GM12878 (cell line): ENCODE measurements at regions of chr5 and their contacts with region 1.

Region 1: GRCh38 chr5:151164686-151165392 is 7.3 kb upstream of the ANXA6 start:
- DNase-seq: peak; percentile 83
- ATAC-seq: peak; percentile 98
- H3K4me3 ChIP-seq: no peak overlapping the region
- H3K27ac ChIP-seq: no peak overlapping the region
- H3K4me1 ChIP-seq: peaks cover 6% of the 10 kb centered on the region; the same call in 1 of the 2 replicates
- H3K27me3 ChIP-seq: no peaks in the 10 kb centered on the region
- CTCF ChIP-seq: peak; percentile 87 to 98 (median 92); a peak in 5 of 6 replicates
- EP300 ChIP-seq: no peak
- POLR2A ChIP-seq: no peak
- RAD21 ChIP-seq: peak; percentile 100

Region 2: GRCh38 chr5:150560401-150561193 is 604.2 kb before region 1 on chr5:
- CTCF ChIA-PET with region 1: interaction called, 8 read pairs
- POLR2A ChIA-PET with region 1: no interaction called
- RAD21 ChIA-PET with region 1: no interaction called
- SMC1A ChIA-PET with region 1: interaction called, 4 read pairs
- in situ Hi-C with region 1: no loop called
- intact Hi-C with region 1: loop called (anchors 2 kb)
- DNase-seq: peak; percentile 42
- ATAC-seq: peak; percentile 91
- H3K4me3 ChIP-seq: no peak overlapping the region
- H3K27ac ChIP-seq: no peak overlapping the region
- H3K4me1 ChIP-seq: peaks cover 14% of the 10 kb centered on the region
- H3K27me3 ChIP-seq: no peaks in the 10 kb centered on the region
- CTCF ChIP-seq: peak; percentile 75 to 89 (median 86)
- EP300 ChIP-seq: no peak
- POLR2A ChIP-seq: no peak
- RAD21 ChIP-seq: peak; percentile 96

Region 3: GRCh38 chr5:150904479-150905318 is 260.1 kb before region 1 on chr5 and contains the start of gene ZNF300:
- CTCF ChIA-PET with region 1: no interaction called
- POLR2A ChIA-PET with region 1: no interaction called
- RAD21 ChIA-PET with region 1: no interaction called
- SMC1A ChIA-PET with region 1: no interaction called
- in situ Hi-C with region 1: no loop called
- intact Hi-C with region 1: no loop called
- DNase-seq: peak; percentile 32
- ATAC-seq: peak; percentile 99
- H3K4me3 ChIP-seq: no peak within 1 kb of the TSS; the same call in 1 of the 2 replicates
- H3K27ac ChIP-seq: no peak within 1 kb of the TSS
- H3K4me1 ChIP-seq: no peaks in the 10 kb centered on the region
- H3K27me3 ChIP-seq: no peaks in the 10 kb centered on the region
- CTCF ChIP-seq: no peak
- EP300 ChIP-seq: no peak
- POLR2A ChIP-seq: peak; percentile 29; the same call in 1 of the 2 replicates
- RAD21 ChIP-seq: no peak
- polyA plus RNA-seq, gene ZNF300: 0.03 to 0.09 TPM

Region 4: DNA sequence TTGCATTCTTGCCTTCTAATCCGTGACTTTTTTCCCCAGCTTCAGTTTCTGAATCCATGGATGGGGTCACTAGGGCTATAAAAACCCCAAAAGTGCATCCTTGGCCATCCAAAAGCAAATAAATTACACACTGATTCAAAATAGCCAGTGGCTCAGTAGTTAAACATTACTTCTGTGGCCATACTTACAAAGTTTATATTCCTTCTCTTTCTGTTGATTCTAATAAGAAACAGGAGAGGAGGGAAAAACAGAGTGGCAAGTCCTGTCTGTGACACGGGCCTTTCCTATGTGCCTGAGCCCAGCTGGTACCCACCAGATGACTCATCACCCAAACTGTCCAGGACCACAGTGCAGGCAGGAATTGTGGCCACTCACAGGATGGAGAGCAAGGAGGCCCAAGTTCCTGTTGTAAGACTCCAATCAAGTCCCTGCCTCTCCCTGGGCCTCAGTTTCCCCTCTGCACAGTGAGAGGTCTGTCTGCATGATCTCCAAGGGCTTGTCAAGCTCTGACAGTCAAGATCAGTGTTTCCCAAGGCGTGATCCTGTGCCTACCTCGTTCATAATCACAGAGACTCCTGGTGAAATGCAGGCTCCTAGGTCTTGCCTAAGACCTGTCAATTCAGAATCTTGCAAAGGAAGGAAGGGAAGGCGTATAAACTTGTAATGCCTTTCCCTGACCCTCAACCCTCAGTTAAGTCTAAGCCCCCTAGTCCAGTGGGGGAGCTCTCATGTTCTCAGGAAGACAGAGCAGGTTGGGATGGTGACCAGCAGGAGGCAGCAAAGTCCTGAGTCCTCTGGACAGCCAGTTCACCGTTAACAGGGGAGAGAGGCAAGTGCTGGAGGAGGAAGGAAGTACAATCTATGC is 113.5 kb before region 1 on chr5:
- CTCF ChIA-PET with region 1: interaction called, 214 read pairs
- POLR2A ChIA-PET with region 1: interaction called, 8 read pairs
- RAD21 ChIA-PET with region 1: interaction called, 39 read pairs
- SMC1A ChIA-PET with region 1: interaction called, 92 read pairs
- in situ Hi-C with region 1: loop called (anchors 5 kb)
- intact Hi-C with region 1: loop called (anchors 1 kb)
- DNase-seq: peak; percentile 43
- ATAC-seq: peak; percentile 93
- H3K4me3 ChIP-seq: no peak overlapping the region
- H3K27ac ChIP-seq: no peak overlapping the region
- H3K4me1 ChIP-seq: no peaks in the 10 kb centered on the region; the same call in 1 of the 2 replicates
- H3K27me3 ChIP-seq: no peaks in the 10 kb centered on the region
- CTCF ChIP-seq: peak; percentile 86 to 87 (median 86)
- EP300 ChIP-seq: no peak
- POLR2A ChIP-seq: no peak
- RAD21 ChIP-seq: peak; percentile 91

Region 5: GRCh38 chr5:151093476-151093889 is 71.4 kb before region 1 on chr5:
- CTCF ChIA-PET with region 1: interaction called, 19 read pairs
- POLR2A ChIA-PET with region 1: no interaction called
- RAD21 ChIA-PET with region 1: interaction called, 9 read pairs
- SMC1A ChIA-PET with region 1: interaction called, 17 read pairs
- in situ Hi-C with region 1: no loop called
- intact Hi-C with region 1: no loop called
- DNase-seq: no peak
- ATAC-seq: peak; percentile 2; the same call in 2 of the 3 replicates
- H3K4me3 ChIP-seq: peak overlapping the region; percentile 53
- H3K27ac ChIP-seq: peak overlapping the region; percentile 98
- H3K4me1 ChIP-seq: peaks cover 59% of the 10 kb centered on the region
- H3K27me3 ChIP-seq: no peaks in the 10 kb centered on the region
- CTCF ChIP-seq: no peak
- EP300 ChIP-seq: no peak
- POLR2A ChIP-seq: no peak
- RAD21 ChIP-seq: no peak

Region 6: DNA sequence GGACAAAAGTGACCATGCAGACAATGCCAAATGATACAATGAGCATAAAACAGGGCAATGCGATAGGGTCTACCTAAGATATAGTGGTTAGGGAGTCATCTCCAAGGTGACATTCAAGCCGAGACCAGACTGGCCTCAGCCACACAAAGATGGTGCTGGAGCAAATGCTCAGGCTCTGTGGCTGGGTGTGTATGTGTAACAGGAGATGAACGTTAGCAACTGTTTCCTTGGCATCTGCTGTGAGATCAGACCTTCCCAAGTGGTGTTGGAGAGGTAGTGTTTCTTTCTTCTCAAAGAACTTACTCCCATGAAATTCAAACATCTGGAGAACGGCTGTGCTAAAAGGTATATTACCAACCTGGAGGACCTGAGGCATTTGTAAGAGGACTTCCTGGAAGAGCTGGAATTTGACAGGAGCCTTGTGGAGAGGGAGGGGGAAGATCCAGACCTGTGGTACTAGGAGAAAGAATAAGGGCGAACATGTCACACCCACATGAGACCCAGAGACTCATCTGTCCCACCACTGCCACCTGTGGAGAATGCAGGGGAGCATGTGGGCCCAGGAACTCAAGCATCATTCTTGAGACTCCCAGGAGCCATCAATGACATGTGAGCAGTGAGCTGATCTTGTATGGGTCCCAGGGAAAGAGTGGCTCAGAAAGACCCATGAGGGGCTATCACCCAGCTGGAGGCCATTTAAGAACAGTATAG is 14.1 kb after region 1 on chr5:
- CTCF ChIA-PET with region 1: interaction called, 29 read pairs
- POLR2A ChIA-PET with region 1: interaction called, 5 read pairs
- RAD21 ChIA-PET with region 1: interaction called, 4 read pairs
- SMC1A ChIA-PET with region 1: interaction called, 12 read pairs
- in situ Hi-C with region 1: no loop called
- intact Hi-C with region 1: no loop called
- DNase-seq: no peak
- ATAC-seq: no peak; the same call in 2 of the 3 replicates
- H3K4me3 ChIP-seq: no peak overlapping the region
- H3K27ac ChIP-seq: no peak overlapping the region
- H3K4me1 ChIP-seq: no peaks in the 10 kb centered on the region
- H3K27me3 ChIP-seq: no peaks in the 10 kb centered on the region
- CTCF ChIP-seq: 0 out of 6 replicates have a peak, but pooled peaks of 1 of the 3 experiments have one; percentile 3
- EP300 ChIP-seq: no peak
- POLR2A ChIP-seq: peak; percentile 27; the same call in 1 of the 2 replicates
- RAD21 ChIP-seq: no peak

Region 7: GRCh38 chr5:151239237-151239861 is 74.5 kb after region 1 on chr5:
- CTCF ChIA-PET with region 1: interaction called, 105 read pairs
- POLR2A ChIA-PET with region 1: interaction called, 3 read pairs
- RAD21 ChIA-PET with region 1: interaction called, 31 read pairs
- SMC1A ChIA-PET with region 1: interaction called, 76 read pairs
- in situ Hi-C with region 1: no loop called
- intact Hi-C with region 1: loop called (anchors 2 kb)
- DNase-seq: no peak
- ATAC-seq: peak; percentile 61
- H3K4me3 ChIP-seq: no peak overlapping the region; the same call in 1 of the 2 replicates
- H3K27ac ChIP-seq: no peak overlapping the region
- H3K4me1 ChIP-seq: peaks cover 70% of the 10 kb centered on the region
- H3K27me3 ChIP-seq: no peaks in the 10 kb centered on the region
- CTCF ChIP-seq: peak; percentile 66 to 72 (median 72)
- EP300 ChIP-seq: no peak
- POLR2A ChIP-seq: no peak
- RAD21 ChIP-seq: peak; percentile 82